Panc1 (cell line): ENCODE measurements at regions of chr19 and their contacts with region 1.

Region 1: GRCh38 chr19:44777715-44778347 is at the start of gene CBLC:
- DNase-seq: no peak
- ATAC-seq: peak; percentile 81
- H3K4me3 ChIP-seq: peak within 1 kb of the TSS; percentile 13 to 35; a peak in 2 of 4 replicates
- H3K27ac ChIP-seq: no peak within 1 kb of the TSS
- H3K4me1 ChIP-seq: peaks cover 10% of the 10 kb centered on the region
- H3K27me3 ChIP-seq: no peaks in the 10 kb centered on the region
- CTCF ChIP-seq: no peak; the same call in 1 of the 2 replicates
- total RNA-seq, gene CBLC: 0.80 TPM

Region 2: DNA sequence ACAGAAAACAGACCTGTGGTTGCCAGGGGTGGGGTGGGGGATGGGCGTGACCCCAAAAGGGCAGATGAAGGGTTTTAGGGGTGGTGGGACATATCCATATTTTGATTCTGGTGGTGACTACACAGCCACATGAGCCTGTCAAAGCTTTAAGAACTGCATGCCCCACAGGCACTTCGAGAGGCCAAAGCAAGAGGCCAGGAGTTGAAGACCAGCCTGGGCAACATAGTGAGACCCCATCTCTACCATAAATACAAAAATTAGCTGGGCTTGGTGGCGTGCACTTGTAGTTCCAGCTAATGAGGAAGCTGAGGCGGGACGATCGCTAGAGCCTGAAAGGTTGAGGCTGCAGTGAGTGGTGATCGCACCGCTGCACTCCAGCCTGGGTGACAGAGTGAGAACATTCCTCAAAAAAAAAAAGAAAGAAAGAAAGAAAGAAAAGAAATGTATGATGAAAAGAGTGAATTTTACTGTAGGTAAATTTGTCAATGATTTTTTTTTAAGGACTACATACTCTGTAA is 48.3 kb before region 1 on chr19:
- CTCF ChIA-PET with region 1: interaction called, 3 read pairs
- POLR2A ChIA-PET with region 1: interaction called, 10 read pairs
- in situ Hi-C with region 1: no loop called
- intact Hi-C with region 1: no loop called
- DNase-seq: no peak
- ATAC-seq: no peak
- H3K4me3 ChIP-seq: no peak overlapping the region
- H3K27ac ChIP-seq: no peak overlapping the region
- H3K4me1 ChIP-seq: peaks cover 14% of the 10 kb centered on the region
- H3K27me3 ChIP-seq: no peaks in the 10 kb centered on the region
- CTCF ChIP-seq: no peak

Region 3: DNA sequence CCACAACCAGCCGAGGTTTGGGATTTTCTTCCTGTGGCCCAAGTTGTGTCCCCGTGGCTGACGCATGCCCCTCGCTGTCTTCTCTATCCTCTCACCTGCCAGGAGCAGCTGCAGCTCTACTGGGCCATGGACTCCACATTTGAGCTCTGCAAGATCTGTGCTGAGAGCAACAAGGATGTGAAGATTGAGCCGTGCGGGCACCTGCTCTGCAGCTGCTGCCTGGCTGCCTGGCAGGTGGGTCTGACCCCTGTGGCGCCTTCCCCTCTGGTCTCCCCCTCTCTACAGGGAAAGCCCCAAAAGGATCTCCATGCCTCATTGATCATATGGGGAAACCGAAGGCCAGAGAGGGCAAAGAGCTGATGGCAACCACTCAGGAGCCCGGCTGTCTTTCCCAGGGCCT is 14.4 kb after region 1 on chr19:
- CTCF ChIA-PET with region 1: no interaction called
- POLR2A ChIA-PET with region 1: no interaction called
- in situ Hi-C with region 1: no loop called
- intact Hi-C with region 1: no loop called
- DNase-seq: no peak
- ATAC-seq: no peak
- H3K4me3 ChIP-seq: no peak overlapping the region
- H3K27ac ChIP-seq: no peak overlapping the region
- H3K4me1 ChIP-seq: peaks cover 6% of the 10 kb centered on the region
- H3K27me3 ChIP-seq: no peaks in the 10 kb centered on the region
- CTCF ChIP-seq: no peak

Region 4: DNA sequence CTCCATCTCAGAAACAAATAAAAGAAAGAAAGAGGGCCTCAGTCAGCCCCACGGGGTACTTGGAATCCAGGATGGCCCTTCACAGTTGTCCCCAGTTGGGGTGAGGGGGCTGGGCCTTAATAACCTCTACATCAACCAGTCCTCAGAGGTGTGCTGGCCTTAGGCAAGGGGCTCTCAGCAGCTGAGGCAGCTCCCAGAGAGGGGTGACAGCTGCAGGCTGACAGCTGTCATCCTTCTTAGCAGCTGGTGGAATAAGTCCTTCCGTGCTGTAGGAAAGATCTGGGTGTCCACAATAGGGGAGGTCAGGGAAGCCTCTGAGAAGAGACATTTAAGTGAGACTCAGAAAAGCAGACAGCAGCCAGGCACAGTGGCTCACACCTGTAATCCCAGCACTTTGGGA is 38.5 kb after region 1 on chr19:
- CTCF ChIA-PET with region 1: no interaction called
- POLR2A ChIA-PET with region 1: no interaction called
- in situ Hi-C with region 1: no loop called
- intact Hi-C with region 1: no loop called
- DNase-seq: no peak
- ATAC-seq: no peak
- H3K4me3 ChIP-seq: no peak overlapping the region
- H3K27ac ChIP-seq: no peak overlapping the region
- H3K4me1 ChIP-seq: no peaks in the 10 kb centered on the region
- H3K27me3 ChIP-seq: no peaks in the 10 kb centered on the region
- CTCF ChIP-seq: no peak

Region 5: GRCh38 chr19:45250214-45250831 is 472.5 kb after region 1 on chr19:
- CTCF ChIA-PET with region 1: no interaction called
- POLR2A ChIA-PET with region 1: no interaction called
- in situ Hi-C with region 1: no loop called
- intact Hi-C with region 1: no loop called
- DNase-seq: no peak
- ATAC-seq: peak; percentile 20; the same call in 1 of the 2 replicates
- H3K4me3 ChIP-seq: peak overlapping the region; percentile 47 to 67
- H3K27ac ChIP-seq: peak overlapping the region; percentile 68; the same call in 1 of the 2 replicates
- H3K4me1 ChIP-seq: no peaks in the 10 kb centered on the region; the same call in 1 of the 2 replicates
- H3K27me3 ChIP-seq: no peaks in the 10 kb centered on the region
- CTCF ChIP-seq: no peak